CD8-positive, alpha-beta memory T cell (primary cell): ENCODE measurements at regions of chr1 and their contacts with region 1.

Region 1: GRCh38 chr1:198681831-198682759 is 43.3 kb downstream of the PTPRC start:
- DNase-seq: peak; percentile 64 to 93 (median 92)
- H3K4me3 ChIP-seq: peak overlapping the region; percentile 51
- H3K4me3 Mint-ChIP-seq: peak overlapping the region; percentile 59 to 87 (median 76)
- H3K27ac ChIP-seq: peak overlapping the region; percentile 85
- H3K27ac Mint-ChIP-seq: peak overlapping the region; percentile 85 to 99 (median 98)
- H3K4me1 ChIP-seq: peaks cover 96% of the 10 kb centered on the region
- H3K4me1 Mint-ChIP-seq: peaks cover 82 to 100% (median 94%) of the 10 kb centered on the region in 3 donors
- H3K27me3 ChIP-seq: no peaks in the 10 kb centered on the region
- H3K27me3 Mint-ChIP-seq: peaks cover 0 to 10% of the 10 kb centered on the region in 2 donors

Region 2: GRCh38 chr1:198523182-198523950 is 158.7 kb before region 1 on chr1:
- CTCF ChIA-PET with region 1: interaction called, 7 read pairs
- POLR2A ChIA-PET with region 1: interaction called, 11 read pairs
- DNase-seq: peak in 2 of 5 donors; percentile 46 to 55
- H3K4me3 ChIP-seq: peak overlapping the region; percentile 51
- H3K4me3 Mint-ChIP-seq: peak overlapping the region; percentile 74 to 87 (median 80)
- H3K27ac ChIP-seq: peak overlapping the region; percentile 10
- H3K27ac Mint-ChIP-seq: peak overlapping the region; percentile 84 to 100 (median 94)
- H3K4me1 ChIP-seq: peaks cover 82% of the 10 kb centered on the region
- H3K4me1 Mint-ChIP-seq: peaks cover 69 to 89% (median 74%) of the 10 kb centered on the region in 3 donors
- H3K27me3 ChIP-seq: no peaks in the 10 kb centered on the region
- H3K27me3 Mint-ChIP-seq: no peaks in the 10 kb centered on the region

Region 3: GRCh38 chr1:198620951-198621824 is 60.9 kb before region 1 on chr1:
- CTCF ChIA-PET with region 1: interaction called, 58 read pairs
- POLR2A ChIA-PET with region 1: interaction called, 15 read pairs
- DNase-seq: peak; percentile 48 to 83 (median 81)
- H3K4me3 ChIP-seq: peak overlapping the region; percentile 52
- H3K4me3 Mint-ChIP-seq: peak overlapping the region; percentile 72 to 92 (median 80)
- H3K27ac ChIP-seq: peak overlapping the region; percentile 62
- H3K27ac Mint-ChIP-seq: peak overlapping the region; percentile 90 to 99 (median 95)
- H3K4me1 ChIP-seq: peaks cover 96% of the 10 kb centered on the region
- H3K4me1 Mint-ChIP-seq: peaks cover 83 to 100% (median 98%) of the 10 kb centered on the region in 3 donors
- H3K27me3 ChIP-seq: no peaks in the 10 kb centered on the region
- H3K27me3 Mint-ChIP-seq: no peaks in the 10 kb centered on the region

Region 4: GRCh38 chr1:198638894-198639635 is 43.0 kb before region 1 on chr1 and contains the start of gene PTPRC:
- CTCF ChIA-PET with region 1: interaction called, 4 read pairs
- POLR2A ChIA-PET with region 1: interaction called, 15 read pairs
- DNase-seq: peak in 2 of 5 donors; percentile 57 to 69
- H3K4me3 ChIP-seq: peak within 1 kb of the TSS; percentile 70
- H3K4me3 Mint-ChIP-seq: peak within 1 kb of the TSS; percentile 85 to 97 (median 89)
- H3K27ac ChIP-seq: peak within 1 kb of the TSS; percentile 91
- H3K27ac Mint-ChIP-seq: peak within 1 kb of the TSS; percentile 82 to 99 (median 94)
- H3K4me1 ChIP-seq: peaks cover 52% of the 10 kb centered on the region
- H3K4me1 Mint-ChIP-seq: peaks cover 49 to 62% (median 49%) of the 10 kb centered on the region in 3 donors
- H3K27me3 ChIP-seq: no peaks in the 10 kb centered on the region
- H3K27me3 Mint-ChIP-seq: no peaks in the 10 kb centered on the region
- total RNA-seq, gene PTPRC: 311 to 319 TPM

Region 5: GRCh38 chr1:198651650-198652400 is 30.3 kb before region 1 on chr1:
- CTCF ChIA-PET with region 1: interaction called, 9 read pairs
- POLR2A ChIA-PET with region 1: interaction called, 40 read pairs
- DNase-seq: no peak
- H3K4me3 ChIP-seq: peak overlapping the region; percentile 48
- H3K4me3 Mint-ChIP-seq: peak overlapping the region; percentile 79 to 87 (median 83)
- H3K27ac ChIP-seq: peak overlapping the region; percentile 9
- H3K27ac Mint-ChIP-seq: peak overlapping the region; percentile 91 to 98 (median 95)
- H3K4me1 ChIP-seq: peaks cover 88% of the 10 kb centered on the region
- H3K4me1 Mint-ChIP-seq: peaks cover 75 to 98% (median 86%) of the 10 kb centered on the region in 3 donors
- H3K27me3 ChIP-seq: no peaks in the 10 kb centered on the region
- H3K27me3 Mint-ChIP-seq: no peaks in the 10 kb centered on the region

Region 6: GRCh38 chr1:198657550-198658064 is 24.5 kb before region 1 on chr1:
- CTCF ChIA-PET with region 1: interaction called, 9 read pairs
- POLR2A ChIA-PET with region 1: interaction called, 40 read pairs
- DNase-seq: peak in 4 of 5 donors; percentile 23 to 74 (median 57)
- H3K4me3 ChIP-seq: peak overlapping the region; percentile 37
- H3K4me3 Mint-ChIP-seq: peak overlapping the region; percentile 63 to 85 (median 78)
- H3K27ac ChIP-seq: peak overlapping the region; percentile 41
- H3K27ac Mint-ChIP-seq: peak overlapping the region; percentile 84 to 98 (median 94)
- H3K4me1 ChIP-seq: peaks cover 88% of the 10 kb centered on the region
- H3K4me1 Mint-ChIP-seq: peaks cover 70 to 99% (median 86%) of the 10 kb centered on the region in 3 donors
- H3K27me3 ChIP-seq: no peaks in the 10 kb centered on the region
- H3K27me3 Mint-ChIP-seq: no peaks in the 10 kb centered on the region

Region 7: DNA sequence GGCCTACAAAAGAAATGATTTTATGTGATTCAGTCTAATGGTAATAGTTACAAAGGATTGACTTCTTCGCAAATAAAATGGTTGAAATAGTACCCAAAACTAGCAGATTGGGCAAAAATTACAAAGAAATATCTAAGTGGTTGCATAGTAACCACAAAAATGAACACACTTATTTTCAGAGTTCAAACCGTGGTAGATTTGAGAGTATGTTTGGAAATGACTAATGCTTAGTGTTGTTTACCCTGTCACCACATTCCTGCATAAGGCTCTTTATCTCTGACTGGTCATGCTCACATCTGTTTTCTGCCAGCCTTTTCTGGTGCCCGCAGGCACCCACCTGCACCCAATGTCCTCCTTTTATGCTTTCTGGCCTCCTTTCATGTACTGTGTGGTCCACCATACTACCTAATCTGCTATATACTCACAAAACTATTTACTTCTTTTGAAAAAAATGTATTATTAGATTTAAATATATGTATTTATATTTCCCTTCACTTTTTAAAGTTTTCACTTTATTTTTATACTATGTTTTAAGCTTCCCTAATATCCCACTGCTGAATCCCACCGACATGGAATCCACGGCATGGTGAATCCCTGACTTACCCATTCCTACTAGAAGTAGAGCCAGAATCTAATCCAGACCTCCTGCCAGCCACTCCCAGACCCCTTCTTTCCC is 12.9 kb before region 1 on chr1:
- CTCF ChIA-PET with region 1: interaction called, 9 read pairs
- POLR2A ChIA-PET with region 1: interaction called, 46 read pairs
- DNase-seq: peak; percentile 20 to 76 (median 48)
- H3K4me3 ChIP-seq: no peak overlapping the region
- H3K4me3 Mint-ChIP-seq: peak overlapping the region; percentile 49 to 84 (median 79)
- H3K27ac ChIP-seq: peak overlapping the region; percentile 22
- H3K27ac Mint-ChIP-seq: peak overlapping the region; percentile 94 to 98 (median 98)
- H3K4me1 ChIP-seq: peaks cover 96% of the 10 kb centered on the region
- H3K4me1 Mint-ChIP-seq: peaks cover 85 to 97% (median 97%) of the 10 kb centered on the region in 3 donors
- H3K27me3 ChIP-seq: no peaks in the 10 kb centered on the region
- H3K27me3 Mint-ChIP-seq: no peaks in the 10 kb centered on the region

Region 8: GRCh38 chr1:198713081-198713480 is 31.0 kb after region 1 on chr1:
- CTCF ChIA-PET with region 1: no interaction called
- POLR2A ChIA-PET with region 1: no interaction called
- DNase-seq: no peak
- H3K4me3 ChIP-seq: no peak overlapping the region
- H3K4me3 Mint-ChIP-seq: no peak overlapping the region
- H3K27ac ChIP-seq: no peak overlapping the region
- H3K27ac Mint-ChIP-seq: peak overlapping the region; percentile 25 to 76 (median 67)
- H3K4me1 ChIP-seq: peaks cover 13% of the 10 kb centered on the region
- H3K4me1 Mint-ChIP-seq: peaks cover 54 to 91% (median 76%) of the 10 kb centered on the region in 3 donors
- H3K27me3 ChIP-seq: no peaks in the 10 kb centered on the region
- H3K27me3 Mint-ChIP-seq: no peaks in the 10 kb centered on the region